Heart right ventricle (tissue), 16 donors: ENCODE measurements at regions of chr17 and their contacts with region 1.

Region 1: DNA sequence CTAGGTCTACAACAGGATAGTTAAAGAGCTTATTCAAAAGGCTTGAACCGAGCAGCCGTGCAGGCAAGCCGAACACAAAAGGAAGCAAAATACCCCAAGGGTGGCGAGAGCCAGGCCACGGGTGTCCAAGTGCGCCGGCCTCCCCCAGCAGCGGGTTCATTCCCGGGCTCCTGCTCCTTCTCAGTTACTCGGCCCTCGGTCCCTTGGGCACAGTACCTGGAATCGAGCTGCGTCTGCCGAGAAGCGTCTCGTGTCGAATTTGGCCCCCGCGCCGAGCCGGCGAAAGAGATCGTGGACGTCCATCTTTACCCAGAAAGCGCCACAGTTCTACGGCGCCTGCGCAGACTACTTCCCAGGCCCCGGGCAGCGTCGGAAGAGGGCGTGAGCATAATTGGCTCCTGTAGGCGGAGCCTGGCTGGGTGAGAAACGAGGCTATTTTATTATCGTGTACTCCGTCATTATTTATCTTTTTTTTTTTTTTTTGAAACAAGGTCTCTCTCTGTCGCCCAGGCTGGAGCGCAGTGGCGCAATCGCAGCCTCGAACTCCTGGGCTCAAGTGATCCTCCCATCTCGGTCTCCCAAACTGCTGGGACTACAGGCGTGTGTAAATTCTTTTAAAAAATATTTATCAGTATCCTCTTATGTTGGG is at the start of gene DDX52:
- DNase-seq: peak; percentile 92 to 93
- ATAC-seq: peak; percentile 98 to 100 (median 100)
- H3K4me3 ChIP-seq: peak within 1 kb of the TSS; percentile 52 to 98 (median 72)
- H3K27ac ChIP-seq: peak within 1 kb of the TSS; percentile 27 to 95 (median 88)
- H3K4me1 ChIP-seq: peaks cover 3 to 47% (median 40%) of the 10 kb centered on the region in 9 donors
- H3K27me3 ChIP-seq: peaks cover 0 to 40% (median 0%) of the 10 kb centered on the region in 7 donors
- CTCF ChIP-seq: peak in 6 of 9 donors; percentile 9 to 41 (median 27)
- total RNA-seq, gene DDX52: 12.7 to 18.0 (median 14.7) TPM

Region 2: DNA sequence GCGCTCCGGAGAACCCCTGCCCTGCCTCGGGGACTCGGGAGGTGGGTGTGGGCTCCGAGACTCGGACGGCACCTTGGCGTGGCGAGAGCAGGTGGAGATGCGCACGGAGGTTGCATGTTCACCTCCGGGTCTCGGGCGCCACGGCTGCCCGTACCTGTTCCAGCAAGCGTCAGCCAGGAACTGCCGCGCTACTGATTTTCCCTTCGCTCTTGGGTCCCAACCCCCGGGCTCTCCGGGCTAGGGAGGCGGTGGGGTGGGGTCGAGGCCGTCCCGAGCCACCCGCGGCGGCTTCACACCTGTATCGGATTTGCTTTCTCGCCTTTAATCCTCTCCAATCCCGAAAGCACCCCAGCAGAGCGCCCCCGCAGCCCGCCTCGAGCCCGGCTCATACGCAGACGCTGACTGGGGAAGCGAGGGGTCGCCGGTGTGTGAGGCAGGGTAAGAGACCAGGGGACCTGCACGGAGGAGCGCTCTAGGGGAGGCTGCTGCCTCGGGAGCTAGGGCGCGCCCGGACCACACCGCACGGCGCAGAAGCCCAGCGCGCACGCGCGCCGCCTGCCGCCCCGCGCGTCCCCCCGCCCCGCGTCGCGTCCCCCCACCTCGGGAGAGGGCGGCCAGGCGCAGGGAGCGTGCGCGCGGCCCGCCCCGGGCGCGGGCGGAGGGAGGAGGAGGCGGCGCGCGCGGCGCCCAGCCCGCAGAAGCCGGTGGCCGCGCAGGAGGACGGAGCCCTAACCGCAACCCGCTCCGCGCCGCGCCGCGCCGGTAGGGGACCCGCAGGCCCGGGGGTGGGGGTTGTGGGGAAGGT is 153.8 kb before region 1 on chr17 and contains the start of gene DUSP14:
- intact Hi-C with region 1: loop called in 1 of 10 experiments (anchors 2 kb)
- DNase-seq: peak; percentile 73 to 86
- ATAC-seq: peak; percentile 80 to 95 (median 87)
- H3K4me3 ChIP-seq: peak within 1 kb of the TSS; percentile 71 to 99 (median 86)
- H3K27ac ChIP-seq: peak within 1 kb of the TSS; percentile 69 to 94 (median 90)
- H3K4me1 ChIP-seq: peaks cover 0 to 44% (median 40%) of the 10 kb centered on the region in 9 donors
- H3K27me3 ChIP-seq: peaks cover 0 to 24% (median 0%) of the 10 kb centered on the region in 7 donors
- CTCF ChIP-seq: no peak
- total RNA-seq, gene DUSP14: 12.6 to 21.7 (median 18.5) TPM

Region 3: DNA sequence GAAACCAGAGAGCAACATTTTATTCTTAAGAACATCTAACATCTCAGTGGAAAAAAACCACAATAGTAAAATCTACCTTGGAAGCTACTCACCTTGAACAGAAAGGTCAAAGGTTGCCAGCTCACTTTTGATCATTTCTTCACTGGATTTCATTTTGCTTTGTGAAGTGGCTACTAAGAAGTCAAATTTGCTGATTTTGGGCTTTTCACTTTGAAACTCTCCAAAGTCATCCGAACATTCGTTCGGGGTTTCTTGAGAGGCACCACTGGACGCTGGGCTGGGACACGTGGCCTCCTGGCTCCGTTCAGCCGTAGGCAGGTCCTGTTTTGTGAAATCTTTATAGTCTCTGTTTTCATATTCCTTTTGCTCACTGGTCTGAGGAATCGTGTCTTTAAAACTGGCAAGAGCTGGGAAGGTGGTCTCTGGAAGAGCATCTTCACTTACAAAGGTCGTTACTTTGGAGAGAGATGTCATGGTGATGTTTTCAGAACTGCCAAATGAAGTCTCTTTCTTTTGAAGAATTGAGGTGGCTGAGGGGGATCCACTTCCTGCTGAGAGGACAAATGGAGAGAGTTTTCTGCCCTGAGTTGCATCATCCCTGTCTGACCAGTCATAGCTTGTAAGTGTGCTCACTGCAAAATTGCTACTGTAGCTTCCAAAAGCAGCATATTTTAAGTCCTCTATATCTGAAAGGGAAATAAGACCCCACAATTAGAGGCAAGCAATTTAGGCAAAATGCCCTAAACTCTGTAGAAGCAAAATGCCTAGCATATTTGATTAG is 101.2 kb before region 1 on chr17:
- intact Hi-C with region 1: no loop called
- DNase-seq: no peak
- ATAC-seq: no peak
- H3K4me3 ChIP-seq: no peak overlapping the region
- H3K27ac ChIP-seq: no peak overlapping the region
- H3K4me1 ChIP-seq: peaks cover 2 to 21% (median 16%) of the 10 kb centered on the region in 9 donors
- H3K27me3 ChIP-seq: no peaks in the 10 kb centered on the region
- CTCF ChIP-seq: no peak

Region 4: GRCh38 chr17:37701496-37701898 is 58.3 kb after region 1 on chr17:
- intact Hi-C with region 1: no loop called
- DNase-seq: peak in 1 of 2 donors; percentile 16
- ATAC-seq: peak in 6 of 8 donors; percentile 20 to 70 (median 51)
- H3K4me3 ChIP-seq: no peak overlapping the region
- H3K27ac ChIP-seq: no peak overlapping the region
- H3K4me1 ChIP-seq: no peaks in the 10 kb centered on the region
- H3K27me3 ChIP-seq: peaks cover 0 to 29% (median 13%) of the 10 kb centered on the region in 7 donors
- CTCF ChIP-seq: peak; percentile 31 to 67 (median 56)

Region 5: DNA sequence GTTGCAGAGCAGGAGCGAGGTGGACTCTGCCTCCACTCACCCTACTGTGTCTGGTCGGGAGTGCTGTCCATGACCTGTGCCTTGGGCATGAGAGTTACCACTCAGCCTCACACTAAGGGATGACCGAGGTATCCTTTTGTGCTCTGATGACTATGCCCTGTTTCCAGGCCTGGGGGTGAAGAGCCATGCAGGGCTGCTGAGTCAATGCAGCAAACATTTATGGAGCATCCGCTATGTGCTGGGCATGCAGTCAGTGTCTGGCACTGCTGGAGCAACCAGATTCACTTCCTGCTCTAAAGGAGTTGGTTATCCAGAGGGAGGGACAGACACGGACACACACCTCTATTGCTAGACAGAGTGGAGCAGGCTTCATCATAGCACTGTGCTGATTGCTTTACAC is 109.2 kb after region 1 on chr17:
- intact Hi-C with region 1: no loop called
- DNase-seq: no peak
- ATAC-seq: no peak
- H3K4me3 ChIP-seq: no peak overlapping the region
- H3K27ac ChIP-seq: no peak overlapping the region
- H3K4me1 ChIP-seq: no peaks in the 10 kb centered on the region
- H3K27me3 ChIP-seq: peaks cover 0 to 62% (median 43%) of the 10 kb centered on the region in 7 donors
- CTCF ChIP-seq: no peak

Region 6: DNA sequence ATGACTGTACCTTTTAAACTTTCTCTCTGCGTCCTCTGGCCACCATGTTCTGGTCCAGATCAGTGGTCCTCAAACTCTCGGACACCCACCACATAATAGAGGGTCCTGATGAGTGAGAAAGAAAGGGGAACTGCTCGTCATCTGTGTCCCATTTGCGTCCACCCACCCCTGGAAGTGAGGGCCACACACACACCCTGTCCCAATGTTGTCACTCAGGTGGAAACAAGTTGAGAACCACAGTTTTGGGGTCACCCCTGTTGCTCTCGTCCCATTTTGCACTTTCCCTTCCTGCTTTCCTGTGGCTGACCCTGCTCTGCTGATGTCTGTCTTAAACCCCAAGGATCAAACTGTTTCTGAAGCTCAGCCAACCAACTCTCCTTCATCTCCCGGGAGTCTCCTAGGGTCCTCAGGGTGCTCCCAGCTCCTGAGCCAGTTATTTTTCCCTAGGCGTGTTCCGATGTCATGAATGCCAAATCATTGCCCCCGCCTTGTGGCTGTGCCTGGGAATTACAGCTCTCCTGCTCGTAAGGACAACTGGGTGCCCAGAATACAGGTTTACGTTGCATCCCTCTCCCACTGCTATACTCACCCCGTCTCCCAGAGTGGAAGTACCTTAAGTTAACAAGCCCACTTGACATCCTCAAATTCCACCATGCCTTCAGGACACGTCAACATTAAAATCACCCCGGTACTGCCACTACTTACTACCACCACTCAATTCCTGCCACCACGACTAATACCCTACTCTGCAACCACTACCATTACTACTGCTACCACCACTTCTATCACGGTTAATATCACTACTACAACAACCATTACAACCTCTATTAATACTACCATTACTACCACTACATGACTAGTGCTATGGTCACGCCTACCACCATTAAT is 127.6 kb after region 1 on chr17:
- intact Hi-C with region 1: loop called in 1 of 10 experiments (anchors 10 kb)
- DNase-seq: peak; percentile 10 to 41
- ATAC-seq: peak in 1 of 8 donors; percentile 51
- H3K4me3 ChIP-seq: no peak overlapping the region
- H3K27ac ChIP-seq: no peak overlapping the region
- H3K4me1 ChIP-seq: no peaks in the 10 kb centered on the region
- H3K27me3 ChIP-seq: peaks cover 0 to 39% (median 14%) of the 10 kb centered on the region in 7 donors
- CTCF ChIP-seq: peak; percentile 28 to 65 (median 58)

Region 7: DNA sequence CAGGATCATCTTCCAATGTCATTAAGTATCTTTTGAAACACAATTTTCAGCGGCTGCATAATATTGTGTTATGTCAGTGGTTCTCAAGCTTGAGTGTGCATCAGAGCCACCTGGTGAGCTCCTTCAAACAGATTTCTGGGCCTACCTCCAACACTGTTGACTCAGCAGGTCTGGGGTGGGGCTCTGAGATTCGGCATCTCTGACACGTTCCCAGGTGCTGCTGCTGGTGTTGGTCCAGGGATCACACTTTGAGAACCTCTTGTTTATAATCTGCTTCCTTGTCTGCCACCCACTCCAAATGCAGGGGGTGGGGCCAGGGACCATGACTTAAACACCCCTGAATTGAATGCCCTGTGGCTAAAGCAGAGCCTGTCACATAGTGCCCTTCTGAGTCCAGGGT is 175.4 kb after region 1 on chr17:
- intact Hi-C with region 1: loop called in 2 of 10 experiments (anchors 10 kb)
- DNase-seq: no peak
- ATAC-seq: no peak
- H3K4me3 ChIP-seq: no peak overlapping the region
- H3K27ac ChIP-seq: no peak overlapping the region
- H3K4me1 ChIP-seq: peaks cover 0 to 18% (median 0%) of the 10 kb centered on the region in 9 donors
- H3K27me3 ChIP-seq: peaks cover 0 to 30% (median 11%) of the 10 kb centered on the region in 7 donors
- CTCF ChIP-seq: no peak

Region 8: GRCh38 chr17:37824534-37825485 is 181.6 kb after region 1 on chr17:
- intact Hi-C with region 1: loop called in 1 of 10 experiments (anchors 10 kb)
- DNase-seq: no peak
- ATAC-seq: peak in 4 of 8 donors; percentile 30 to 54 (median 40)
- H3K4me3 ChIP-seq: no peak overlapping the region
- H3K27ac ChIP-seq: no peak overlapping the region
- H3K4me1 ChIP-seq: peaks cover 0 to 61% (median 12%) of the 10 kb centered on the region in 9 donors
- H3K27me3 ChIP-seq: peaks cover 0 to under 1% (median 0%) of the 10 kb centered on the region in 7 donors
- CTCF ChIP-seq: no peak